ENCODE measurements at regions of chr6 and their contacts with region 1.

Region 1: DNA sequence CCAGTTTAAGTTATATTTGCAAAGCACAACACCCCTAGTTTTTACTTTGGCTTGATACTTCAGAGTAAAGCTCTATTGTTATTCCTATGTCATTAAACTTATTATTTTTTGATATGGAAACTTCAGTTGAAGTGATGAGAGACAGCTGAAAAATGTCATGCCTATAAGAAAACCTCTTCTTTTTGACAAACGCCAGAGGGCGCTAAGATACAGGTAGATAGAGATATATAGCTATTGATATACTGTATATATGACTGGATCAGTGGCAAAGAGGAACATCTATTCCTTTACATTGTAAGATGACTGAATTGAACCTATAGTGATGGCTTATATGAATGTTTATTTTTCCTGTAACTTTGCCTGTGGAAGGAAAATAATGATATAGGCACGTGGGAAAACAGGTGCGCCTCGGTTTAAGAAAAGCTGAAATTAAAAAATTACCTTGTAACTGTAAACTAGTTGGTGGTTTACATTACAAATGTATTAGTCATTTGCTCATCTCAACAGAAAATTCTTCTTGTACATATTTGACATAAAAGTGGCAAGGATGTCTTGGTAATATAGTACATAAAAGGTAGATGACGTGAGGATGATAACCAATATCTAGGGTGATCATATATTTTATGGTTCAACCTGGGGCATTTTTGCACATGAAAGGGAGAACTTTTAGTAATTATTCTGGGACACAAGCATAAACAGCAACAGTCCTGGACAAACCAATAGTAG is 74.1 kb downstream of the LAMA4 start:
- DNase-seq: no peak

Region 2: GRCh38 chr6:112223070-112223861 is 43.0 kb after region 1 on chr6:
- intact Hi-C with region 1: loop called (anchors 5 kb)
- DNase-seq: no peak

Region 3: GRCh38 chr6:112269114-112269513 is 88.9 kb after region 1 on chr6:
- intact Hi-C with region 1: loop called (anchors 5 kb)
- DNase-seq: no peak

Region 4: GRCh38 chr6:112282221-112282620 is 102.0 kb after region 1 on chr6:
- intact Hi-C with region 1: loop called (anchors 5 kb)
- DNase-seq: no peak

Region 5: GRCh38 chr6:112311950-112312547 is 131.8 kb after region 1 on chr6:
- intact Hi-C with region 1: loop called (anchors 1 kb)
- DNase-seq: no peak